K562 (cell line): ENCODE measurements at regions of chr1 and their contacts with region 1.

Region 1: DNA sequence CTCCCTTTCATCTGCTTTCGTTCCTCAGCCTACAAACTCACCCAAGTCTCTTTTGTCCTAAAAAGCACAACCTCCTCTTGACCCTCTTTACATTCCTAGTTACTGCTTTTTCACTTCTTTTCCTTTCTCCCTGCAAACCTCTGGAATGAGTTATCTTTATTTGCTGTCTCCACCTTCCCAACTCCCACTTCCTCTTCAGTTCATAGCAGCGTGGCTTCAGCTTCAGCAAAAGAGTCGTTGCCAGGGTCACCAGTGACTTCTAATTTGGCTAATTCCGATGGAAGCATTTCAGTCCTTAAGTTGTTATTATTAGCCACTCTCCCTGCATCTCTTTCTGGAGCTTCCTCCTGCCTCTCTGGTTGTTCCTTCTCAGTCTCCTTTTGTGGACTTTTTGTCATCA is 6.2 kb upstream of the TMEM54 start:
- DNase-seq: no peak
- ATAC-seq: no peak
- H3K4me3 ChIP-seq: no peak overlapping the region
- H3K27ac ChIP-seq: no peak overlapping the region
- H3K4me1 ChIP-seq: no peaks in the 10 kb centered on the region; a peak in 2 of 5 replicates
- H3K27me3 ChIP-seq: peaks cover 6 to 13% of the 10 kb centered on the region in 2 experiments; a peak in 3 of 5 replicates
- CTCF ChIP-seq: no peak
- EP300 ChIP-seq: no peak
- POLR2A ChIP-seq: no peak
- RAD21 ChIP-seq: no peak

Region 2: GRCh38 chr1:32892368-32893197 is 14.9 kb before region 1 on chr1:
- CTCF ChIA-PET with region 1: no interaction called
- POLR2A ChIA-PET with region 1: interaction called, 12 read pairs
- in situ Hi-C with region 1: no loop called
- intact Hi-C with region 1: no loop called
- DNase-seq: peak; percentile 78 to 88 (median 85)
- ATAC-seq: peak; percentile 94
- H3K4me3 ChIP-seq: peak overlapping the region; percentile 42
- H3K27ac ChIP-seq: no peak overlapping the region
- H3K4me1 ChIP-seq: peaks cover 5 to 18% of the 10 kb centered on the region in 2 experiments; a peak in 3 of 5 replicates
- H3K27me3 ChIP-seq: peaks cover 5 to 67% of the 10 kb centered on the region in 2 experiments; a peak in 3 of 5 replicates
- CTCF ChIP-seq: peak; percentile 75 to 99 (median 94)
- EP300 ChIP-seq: no peak
- POLR2A ChIP-seq: no peak
- RAD21 ChIP-seq: peak in 1 of 2 experiments; percentile 55; a peak in 2 of 4 replicates